Activated CD4-positive, alpha-beta T cell treated with anti-CD3 and anti-CD28 coated beads, Interleukin-2, amount 10 ng/mL, durations not matched to agents 7 days and 5 days (primary cell): ENCODE measurements at regions of chr12 and their contacts with region 1.

Region 1: DNA sequence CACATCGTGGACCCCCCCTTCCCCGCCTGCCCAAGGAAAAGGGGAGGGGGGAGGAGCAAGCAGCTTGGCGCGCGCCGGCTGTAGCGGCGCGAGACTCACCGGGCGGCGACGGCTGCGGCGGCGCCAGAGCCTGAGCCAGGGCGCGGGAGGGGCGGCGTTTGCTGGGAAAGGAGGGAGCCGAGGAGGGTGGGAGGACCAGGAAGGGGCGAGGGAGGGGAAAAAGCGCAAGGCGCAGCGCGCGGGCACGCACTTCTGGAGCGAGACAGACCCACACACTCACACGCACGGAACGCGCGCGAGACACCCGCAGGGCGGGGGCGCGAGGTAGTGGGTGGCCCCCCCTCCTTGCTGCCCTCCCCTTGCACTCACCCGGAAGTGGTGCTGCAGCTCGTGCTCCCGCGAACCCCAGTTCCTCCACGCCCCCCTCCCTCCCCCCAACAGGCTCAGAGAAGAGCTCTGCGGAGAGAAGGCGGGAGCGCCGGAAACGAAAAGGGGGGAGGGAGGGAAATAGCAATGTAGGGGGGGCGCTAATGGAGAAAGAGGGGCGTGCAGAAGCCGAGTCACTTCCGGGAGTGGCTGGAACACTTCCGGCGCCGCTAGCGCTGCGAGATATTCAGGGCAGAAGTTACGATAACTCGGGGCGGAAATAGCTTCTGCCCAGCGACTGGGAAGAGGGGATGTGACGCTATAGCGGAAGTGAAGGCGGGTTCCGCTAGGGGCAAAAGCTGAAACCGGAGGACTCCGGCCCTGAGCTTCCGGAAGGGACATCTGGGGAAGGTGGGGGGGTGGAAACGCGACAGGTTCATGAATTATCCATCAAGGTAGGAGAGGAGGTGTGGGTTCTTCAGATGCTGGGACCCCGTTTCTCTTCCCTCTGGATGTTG is at the start of gene ZNF384:
- DNase-seq: peak; percentile 97
- H3K4me3 Mint-ChIP-seq: peak within 1 kb of the TSS; percentile 88
- H3K27ac Mint-ChIP-seq: peak within 1 kb of the TSS; percentile 95
- H3K4me1 Mint-ChIP-seq: peaks cover 51% of the 10 kb centered on the region
- H3K27me3 Mint-ChIP-seq: no peaks in the 10 kb centered on the region
- total RNA-seq, gene ZNF384: 90.9 to 95.4 TPM

Region 2: DNA sequence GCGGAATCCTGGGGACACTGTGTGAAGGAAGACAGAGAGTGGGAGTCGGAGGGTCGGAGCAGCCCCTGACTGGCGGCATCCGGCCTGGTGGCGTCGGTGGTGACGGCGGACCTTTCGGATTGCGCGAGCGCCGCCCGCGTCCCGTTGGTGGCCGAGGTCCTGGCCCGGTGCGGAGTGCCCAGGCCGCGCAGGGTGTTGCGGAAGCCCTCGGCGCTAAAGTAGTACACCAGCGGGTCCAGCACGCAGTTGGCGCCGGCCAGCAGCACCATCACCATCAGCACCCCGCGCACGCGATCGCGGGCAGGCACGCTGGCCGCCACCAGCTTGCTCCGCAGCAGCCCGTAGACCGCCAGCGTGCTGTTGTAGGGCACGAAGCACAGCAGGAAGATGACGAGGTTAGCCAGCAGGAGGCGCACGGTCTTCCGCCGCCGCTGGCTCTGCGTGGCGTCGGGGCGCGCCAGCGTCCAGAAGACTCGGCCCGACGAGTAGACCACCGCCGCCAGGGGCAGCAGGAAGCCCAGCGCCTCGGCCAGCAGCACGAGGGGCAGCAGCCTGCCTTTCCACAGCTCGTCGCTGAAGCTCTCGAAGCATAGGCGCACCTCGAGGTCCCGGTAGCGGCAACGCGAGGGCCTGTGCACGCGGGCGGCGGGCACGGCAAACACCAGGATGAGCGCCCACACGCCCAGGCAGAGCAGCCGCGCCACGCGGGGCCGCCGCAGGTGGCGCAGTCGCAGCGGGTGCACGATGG is 68.9 kb before region 1 on chr12:
- CTCF ChIA-PET with region 1: interaction called, 11 read pairs
- POLR2A ChIA-PET with region 1: no interaction called
- DNase-seq: peak; percentile 57
- H3K4me3 Mint-ChIP-seq: no peak overlapping the region
- H3K27ac Mint-ChIP-seq: peak overlapping the region; percentile 78
- H3K4me1 Mint-ChIP-seq: peaks cover 25% of the 10 kb centered on the region
- H3K27me3 Mint-ChIP-seq: no peaks in the 10 kb centered on the region

Region 3: DNA sequence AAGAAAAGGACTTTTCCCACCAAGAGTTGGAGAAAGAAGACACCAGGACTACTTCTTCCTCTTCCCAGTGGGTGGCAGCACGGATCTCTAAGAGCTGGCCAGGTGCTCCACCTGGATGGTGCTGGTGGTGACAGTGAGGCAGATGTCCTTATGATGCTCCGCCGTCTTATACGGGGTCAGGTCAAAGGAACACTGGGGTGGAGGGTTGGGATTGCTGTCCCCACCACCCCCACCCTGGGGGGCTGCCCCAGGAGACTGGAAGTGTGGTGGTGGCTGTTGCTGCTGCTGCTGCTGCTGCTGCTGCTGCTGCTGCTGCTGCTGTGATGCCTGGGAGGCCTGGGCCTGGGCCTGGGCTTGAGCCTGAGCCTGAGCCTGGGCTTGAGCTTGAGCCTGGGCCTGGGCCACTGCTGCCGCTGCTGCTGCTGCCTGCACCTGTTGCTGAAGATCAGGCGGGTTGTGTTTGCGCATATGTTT is 21.6 kb before region 1 on chr12:
- CTCF ChIA-PET with region 1: interaction called, 10 read pairs
- POLR2A ChIA-PET with region 1: no interaction called
- DNase-seq: no peak
- H3K4me3 Mint-ChIP-seq: no peak overlapping the region
- H3K27ac Mint-ChIP-seq: no peak overlapping the region
- H3K4me1 Mint-ChIP-seq: peaks cover 21% of the 10 kb centered on the region
- H3K27me3 Mint-ChIP-seq: no peaks in the 10 kb centered on the region

Region 4: GRCh38 chr12:6723607-6724396 is 34.6 kb after region 1 on chr12 and contains the start of gene COPS7A:
- CTCF ChIA-PET with region 1: interaction called, 11 read pairs
- POLR2A ChIA-PET with region 1: interaction called, 10 read pairs
- DNase-seq: peak; percentile 98
- H3K4me3 Mint-ChIP-seq: peak within 1 kb of the TSS; percentile 89
- H3K27ac Mint-ChIP-seq: peak within 1 kb of the TSS; percentile 92
- H3K4me1 Mint-ChIP-seq: peaks cover 24% of the 10 kb centered on the region
- H3K27me3 Mint-ChIP-seq: no peaks in the 10 kb centered on the region
- total RNA-seq, gene COPS7A: 29.5 to 36.8 TPM